CD8-positive, alpha-beta T cell (primary cell): ENCODE measurements at regions of chr13 and their contacts with region 1.

Region 1: GRCh38 chr13:46961719-46962118 is 64.9 kb upstream of the HTR2A start:
- DNase-seq: peak in 1 of 9 experiments; percentile 18
- ATAC-seq: no peak
- H3K4me3 ChIP-seq: no peak overlapping the region
- H3K4me3 Mint-ChIP-seq: no peak overlapping the region
- H3K27ac ChIP-seq: no peak overlapping the region
- H3K27ac Mint-ChIP-seq: no peak overlapping the region
- H3K4me1 ChIP-seq: no peaks in the 10 kb centered on the region
- H3K4me1 Mint-ChIP-seq: no peaks in the 10 kb centered on the region
- H3K27me3 ChIP-seq: no peaks in the 10 kb centered on the region
- H3K27me3 Mint-ChIP-seq: peaks cover 4% of the 10 kb centered on the region
- CTCF ChIP-seq: no peak

Region 2: GRCh38 chr13:47499358-47500150 is 537.8 kb after region 1 on chr13:
- CTCF ChIA-PET with region 1: no interaction called
- POLR2A ChIA-PET with region 1: no interaction called
- intact Hi-C with region 1: loop called in 1 of 2 experiments (anchors 5 kb)
- DNase-seq: peak in 1 of 9 experiments; percentile 4
- ATAC-seq: no peak
- H3K4me3 ChIP-seq: no peak overlapping the region
- H3K4me3 Mint-ChIP-seq: no peak overlapping the region
- H3K27ac ChIP-seq: no peak overlapping the region
- H3K27ac Mint-ChIP-seq: no peak overlapping the region
- H3K4me1 ChIP-seq: no peaks in the 10 kb centered on the region
- H3K4me1 Mint-ChIP-seq: no peaks in the 10 kb centered on the region
- H3K27me3 ChIP-seq: no peaks in the 10 kb centered on the region
- H3K27me3 Mint-ChIP-seq: peaks cover 3% of the 10 kb centered on the region
- CTCF ChIP-seq: no peak